A673 (cell line): ENCODE measurements at regions of chr1 and their contacts with region 1.

Region 1: GRCh38 chr1:163174524-163175437 is 27.9 kb downstream of the RGS5 start:
- DNase-seq: peak; percentile 94
- H3K4me3 ChIP-seq: peak overlapping the region; percentile 13
- H3K27ac ChIP-seq: peak overlapping the region; percentile 80
- H3K4me1 ChIP-seq: peaks cover 72% of the 10 kb centered on the region
- H3K27me3 ChIP-seq: no peaks in the 10 kb centered on the region
- CTCF ChIP-seq: peak; percentile 94

Region 2: DNA sequence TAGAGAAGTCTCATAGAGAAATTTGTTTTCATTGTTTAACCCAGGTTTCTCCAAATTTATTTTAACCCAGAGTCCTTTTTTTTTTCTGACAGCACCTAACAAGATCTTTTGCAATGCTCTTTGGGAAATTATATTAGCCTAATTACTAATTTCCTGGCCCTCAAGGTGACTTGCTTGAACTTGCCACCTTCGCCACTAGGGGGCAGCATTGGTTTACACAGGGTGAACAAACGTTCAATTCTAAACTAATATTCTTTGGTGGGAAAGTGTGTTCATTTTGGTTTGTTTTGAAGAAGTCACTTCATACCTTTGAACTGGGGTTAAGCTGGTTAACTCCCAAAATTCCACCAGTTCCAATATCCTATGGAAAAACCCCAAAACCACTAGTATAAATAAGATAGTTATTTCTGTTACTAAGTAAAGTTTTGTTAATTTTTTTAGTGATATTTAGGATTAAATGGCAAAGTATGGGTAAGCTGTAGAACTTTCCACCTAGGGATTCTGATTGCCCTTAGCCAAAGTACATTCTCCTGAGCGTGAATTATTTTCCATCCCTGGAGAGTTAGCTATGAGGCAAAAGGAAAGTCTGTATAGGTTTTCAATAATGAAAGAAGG is 326.8 kb before region 1 on chr1:
- CTCF ChIA-PET with region 1: interaction called, 9 read pairs
- POLR2A ChIA-PET with region 1: no interaction called
- intact Hi-C with region 1: loop called (anchors 2 kb)
- DNase-seq: peak; percentile 89
- H3K4me3 ChIP-seq: no peak overlapping the region
- H3K27ac ChIP-seq: peak overlapping the region; percentile 20
- H3K4me1 ChIP-seq: peaks cover 53% of the 10 kb centered on the region
- H3K27me3 ChIP-seq: no peaks in the 10 kb centered on the region
- CTCF ChIP-seq: peak; percentile 94

Region 3: DNA sequence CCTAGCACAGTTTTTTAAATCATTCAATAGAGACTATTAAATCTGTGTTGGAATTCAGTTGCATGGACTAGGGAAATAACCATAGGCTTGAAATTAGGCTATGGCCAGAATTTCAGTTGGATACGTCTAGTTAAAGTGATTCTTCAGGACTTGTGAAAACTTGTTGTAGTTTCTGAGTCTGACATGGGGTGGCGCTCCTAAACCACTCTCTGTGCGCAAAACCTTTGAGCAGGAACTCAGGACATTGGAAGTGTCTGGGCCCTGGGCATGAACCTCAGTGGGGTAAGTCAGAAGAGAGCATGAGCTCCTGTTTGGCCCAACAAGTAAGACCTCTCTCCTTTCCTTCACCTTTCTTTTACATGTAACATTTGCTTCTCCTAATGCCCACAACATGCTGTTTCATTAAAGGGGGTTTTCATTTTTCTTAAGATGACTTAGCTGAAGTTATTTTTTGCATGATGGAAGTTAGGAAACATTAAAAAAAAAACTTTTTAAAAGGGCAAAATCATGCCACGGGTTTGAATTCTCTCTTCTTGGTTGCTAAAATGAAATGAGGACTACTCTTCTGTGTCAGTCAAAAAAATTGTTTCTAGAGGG is 296.7 kb before region 1 on chr1:
- CTCF ChIA-PET with region 1: interaction called, 4 read pairs
- POLR2A ChIA-PET with region 1: no interaction called
- intact Hi-C with region 1: loop called (anchors 1 kb)
- DNase-seq: peak; percentile 87
- H3K4me3 ChIP-seq: no peak overlapping the region
- H3K27ac ChIP-seq: no peak overlapping the region
- H3K4me1 ChIP-seq: no peaks in the 10 kb centered on the region
- H3K27me3 ChIP-seq: no peaks in the 10 kb centered on the region
- CTCF ChIP-seq: peak; percentile 91

Region 4: GRCh38 chr1:163076981-163077761 is 97.6 kb before region 1 on chr1:
- CTCF ChIA-PET with region 1: no interaction called
- POLR2A ChIA-PET with region 1: no interaction called
- intact Hi-C with region 1: no loop called
- DNase-seq: no peak
- H3K4me3 ChIP-seq: no peak overlapping the region
- H3K27ac ChIP-seq: peak overlapping the region; percentile 0
- H3K4me1 ChIP-seq: peaks cover 23% of the 10 kb centered on the region
- H3K27me3 ChIP-seq: no peaks in the 10 kb centered on the region
- CTCF ChIP-seq: no peak

Region 5: DNA sequence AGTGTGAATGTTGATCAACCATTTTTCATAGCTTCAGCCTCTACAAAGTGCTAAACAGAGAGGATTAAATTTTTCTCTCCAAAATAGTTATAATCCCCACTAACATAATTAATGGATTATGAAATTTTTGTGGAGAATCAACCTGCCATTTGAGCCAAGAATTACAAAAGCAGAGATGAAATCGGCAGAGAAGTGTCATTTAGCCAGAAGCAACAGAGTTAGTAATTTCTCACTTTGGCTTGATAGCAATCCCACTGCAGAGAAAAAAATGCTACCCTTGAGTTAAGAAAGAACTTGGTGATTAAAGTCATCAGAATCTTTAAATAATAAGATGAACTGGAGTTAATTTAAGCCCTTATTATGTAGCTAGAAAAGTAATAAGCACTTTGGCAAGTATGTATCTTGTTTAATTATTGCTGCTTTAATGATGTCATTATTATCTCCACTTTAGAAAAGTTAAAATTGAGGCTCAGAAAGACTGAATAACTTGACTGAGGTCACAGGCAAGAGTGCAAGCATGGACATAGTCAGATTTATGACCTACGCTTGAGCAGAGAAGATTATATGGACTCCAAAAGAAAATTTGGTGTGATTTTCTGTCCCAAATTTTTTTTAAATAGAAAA is 68.3 kb before region 1 on chr1:
- CTCF ChIA-PET with region 1: no interaction called
- POLR2A ChIA-PET with region 1: no interaction called
- intact Hi-C with region 1: loop called (anchors 5 kb)
- DNase-seq: peak; percentile 47
- H3K4me3 ChIP-seq: peak overlapping the region; percentile 3
- H3K27ac ChIP-seq: peak overlapping the region; percentile 80
- H3K4me1 ChIP-seq: peaks cover 39% of the 10 kb centered on the region
- H3K27me3 ChIP-seq: no peaks in the 10 kb centered on the region
- CTCF ChIP-seq: no peak

Region 6: DNA sequence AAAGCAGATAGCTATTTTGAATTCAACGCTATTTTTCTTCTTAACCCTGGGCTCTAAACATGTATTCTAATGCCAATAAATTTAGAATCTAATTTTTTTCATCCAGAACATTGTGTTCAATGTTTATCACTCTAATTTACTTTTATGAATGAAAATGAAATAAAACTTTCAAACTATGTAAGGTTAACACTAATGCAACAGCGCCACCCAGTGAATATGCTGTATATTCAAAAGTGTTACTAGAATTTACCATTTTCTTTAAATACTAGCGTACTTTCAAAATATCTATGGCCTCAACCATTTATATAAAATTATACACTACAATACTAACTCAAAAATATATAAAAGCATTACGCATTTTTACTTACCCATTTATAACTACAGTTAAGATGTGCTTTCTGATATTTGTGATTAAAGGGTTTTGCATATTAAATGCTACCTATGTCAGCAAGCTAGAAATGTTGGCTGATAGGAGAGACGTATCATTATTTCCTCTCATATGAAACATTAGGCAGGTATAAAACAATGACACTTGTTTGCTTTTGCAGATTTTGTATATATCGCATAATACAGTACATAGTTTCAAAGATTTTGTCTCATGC is 141.1 kb after region 1 on chr1:
- CTCF ChIA-PET with region 1: no interaction called
- POLR2A ChIA-PET with region 1: no interaction called
- intact Hi-C with region 1: loop called (anchors 5 kb)
- DNase-seq: peak; percentile 62
- H3K4me3 ChIP-seq: no peak overlapping the region
- H3K27ac ChIP-seq: no peak overlapping the region
- H3K4me1 ChIP-seq: peaks cover 4% of the 10 kb centered on the region
- H3K27me3 ChIP-seq: no peaks in the 10 kb centered on the region
- CTCF ChIP-seq: peak; percentile 87